ENCODE measurements at regions of chr2 and their contacts with region 1.

Region 1: GRCh38 chr2:46803911-46804670 is 111.5 kb downstream of the MCFD2 start:
- DNase-seq: no peak
- ATAC-seq: peak in 1 of 2 donors; percentile 63

Region 2: DNA sequence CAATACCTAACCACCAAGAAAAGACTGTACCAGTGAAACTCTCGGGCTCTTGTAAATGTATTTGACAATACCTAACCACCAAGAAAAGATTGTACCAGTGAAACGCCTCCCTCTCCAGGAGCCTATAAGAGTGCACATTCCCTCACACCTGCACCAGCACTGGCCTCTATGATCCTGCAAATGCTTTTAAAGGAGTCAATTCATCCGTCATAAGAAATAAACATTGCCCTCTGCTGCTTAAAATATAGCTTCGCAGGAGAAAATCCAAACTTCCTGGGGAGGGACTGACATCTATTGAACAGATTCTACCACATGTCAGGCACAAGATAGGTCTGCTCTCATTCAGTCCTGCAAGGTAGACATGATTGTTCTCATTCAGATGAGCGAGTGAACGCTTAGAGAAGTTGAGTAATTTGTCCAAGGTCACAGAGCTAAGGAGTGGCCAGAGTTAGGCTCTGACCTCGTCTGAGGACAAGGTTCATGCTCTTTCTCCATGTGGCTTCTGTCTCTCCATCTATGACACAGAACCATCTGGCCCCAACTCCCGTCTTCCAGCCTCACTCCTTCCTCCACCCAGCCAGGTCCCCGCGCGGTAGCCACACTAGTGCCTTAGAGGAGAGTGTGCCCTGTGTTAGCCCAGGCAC is 72.8 kb after region 1 on chr2:
- intact Hi-C with region 1: loop called in 1 of 2 experiments (anchors 2 kb)
- DNase-seq: peak; percentile 56
- ATAC-seq: peak; percentile 20 to 34

Region 3: DNA sequence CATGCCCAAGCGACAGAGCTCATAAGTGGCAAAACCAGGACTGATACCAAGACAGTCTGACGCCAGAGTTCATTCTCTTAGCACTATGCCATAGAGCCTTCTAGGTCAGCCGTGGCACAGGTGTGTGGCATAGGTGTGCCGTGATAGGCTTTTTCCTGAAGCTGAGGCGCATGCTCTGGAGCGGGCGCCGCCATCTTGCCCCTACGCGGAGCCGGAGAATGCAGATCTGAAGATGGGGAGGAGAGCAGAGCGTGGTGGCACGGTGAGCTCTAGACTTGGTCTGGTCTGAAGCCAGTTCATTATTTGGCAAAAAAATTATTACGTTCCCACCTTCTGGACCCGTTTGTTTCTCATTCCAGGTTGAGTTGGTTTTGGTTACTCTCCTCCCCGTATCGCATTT is 95.0 kb after region 1 on chr2:
- intact Hi-C with region 1: no loop called
- DNase-seq: no peak
- ATAC-seq: no peak

Region 4: GRCh38 chr2:46909771-46910419 is 105.8 kb after region 1 on chr2:
- intact Hi-C with region 1: no loop called
- DNase-seq: no peak
- ATAC-seq: peak in 1 of 2 donors; percentile 70